CD8-positive, alpha-beta T cell (primary cell): ENCODE measurements at regions of chr10 and their contacts with region 1.

Region 1: GRCh38 chr10:101840741-101841453 is 2.7 kb downstream of the KCNIP2 start:
- DNase-seq: peak; percentile 39 to 82 (median 72)
- ATAC-seq: peak; percentile 44
- H3K4me3 ChIP-seq: peak overlapping the region; percentile 47 to 48
- H3K4me3 Mint-ChIP-seq: peak overlapping the region; percentile 84
- H3K27ac ChIP-seq: no peak overlapping the region
- H3K27ac Mint-ChIP-seq: no peak overlapping the region
- H3K4me1 ChIP-seq: peaks cover 38% of the 10 kb centered on the region
- H3K4me1 Mint-ChIP-seq: peaks cover 48% of the 10 kb centered on the region
- H3K27me3 ChIP-seq: no peaks in the 10 kb centered on the region
- H3K27me3 Mint-ChIP-seq: peaks cover 8% of the 10 kb centered on the region
- CTCF ChIP-seq: peak; percentile 84

Region 2: DNA sequence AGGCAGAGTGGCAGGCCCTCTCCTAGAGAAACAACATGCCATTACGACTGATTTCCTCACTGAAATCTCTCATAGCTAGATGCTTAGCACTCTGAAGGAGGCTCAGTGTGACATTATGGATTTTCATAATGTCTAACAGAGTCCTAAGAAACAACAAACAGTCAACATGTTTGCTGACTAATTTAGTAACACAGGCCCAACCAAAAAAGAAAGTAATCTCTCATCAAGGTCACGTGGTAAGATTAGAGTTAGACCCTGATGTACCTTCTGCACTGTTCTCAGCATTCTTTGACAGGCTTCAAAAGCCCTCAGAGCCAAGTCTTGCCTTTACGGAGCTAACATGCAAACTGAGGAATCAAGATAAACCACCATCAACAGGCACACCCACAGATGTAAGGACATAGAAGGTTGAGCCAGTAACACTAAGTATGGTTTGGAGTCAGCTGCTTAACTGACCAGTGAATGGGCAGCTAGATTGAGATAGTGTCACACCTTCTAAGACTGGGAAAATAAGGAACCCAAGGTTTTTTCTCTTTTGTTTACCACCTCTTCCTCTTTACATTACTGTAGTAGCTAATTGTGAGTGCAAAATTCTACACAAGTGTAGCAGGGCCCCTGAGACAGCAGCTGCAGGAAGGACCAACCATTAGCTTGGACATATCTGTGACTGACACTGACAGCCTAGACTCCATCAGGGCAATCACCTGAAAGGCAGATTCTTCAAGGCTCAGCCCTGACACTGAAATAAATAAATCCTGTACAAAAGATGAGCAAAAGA is 18.0 kb after region 1 on chr10:
- CTCF ChIA-PET with region 1: interaction called, 14 read pairs
- POLR2A ChIA-PET with region 1: no interaction called
- intact Hi-C with region 1: no loop called
- DNase-seq: no peak
- ATAC-seq: no peak
- H3K4me3 ChIP-seq: peak overlapping the region in 1 of 2 experiments; percentile 10
- H3K4me3 Mint-ChIP-seq: peak overlapping the region; percentile 38
- H3K27ac ChIP-seq: peak overlapping the region in 1 of 2 experiments; percentile 52
- H3K27ac Mint-ChIP-seq: no peak overlapping the region
- H3K4me1 ChIP-seq: no peaks in the 10 kb centered on the region
- H3K4me1 Mint-ChIP-seq: peaks cover 4% of the 10 kb centered on the region
- H3K27me3 ChIP-seq: no peaks in the 10 kb centered on the region
- H3K27me3 Mint-ChIP-seq: no peaks in the 10 kb centered on the region
- CTCF ChIP-seq: no peak

Region 3: GRCh38 chr10:101889256-101890210 is 48.6 kb after region 1 on chr10:
- CTCF ChIA-PET with region 1: interaction called, 15 read pairs
- POLR2A ChIA-PET with region 1: no interaction called
- intact Hi-C with region 1: no loop called
- DNase-seq: peak; percentile 27 to 73 (median 63)
- ATAC-seq: peak; percentile 76
- H3K4me3 ChIP-seq: no peak overlapping the region
- H3K4me3 Mint-ChIP-seq: no peak overlapping the region
- H3K27ac ChIP-seq: no peak overlapping the region
- H3K27ac Mint-ChIP-seq: no peak overlapping the region
- H3K4me1 ChIP-seq: no peaks in the 10 kb centered on the region
- H3K4me1 Mint-ChIP-seq: no peaks in the 10 kb centered on the region
- H3K27me3 ChIP-seq: no peaks in the 10 kb centered on the region
- H3K27me3 Mint-ChIP-seq: no peaks in the 10 kb centered on the region
- CTCF ChIP-seq: peak; percentile 88

Region 4: GRCh38 chr10:103127241-103127640 is 1286.3 kb after region 1 on chr10:
- CTCF ChIA-PET with region 1: no interaction called
- POLR2A ChIA-PET with region 1: no interaction called
- intact Hi-C with region 1: no loop called
- DNase-seq: no peak
- ATAC-seq: no peak
- H3K4me3 ChIP-seq: no peak overlapping the region
- H3K4me3 Mint-ChIP-seq: no peak overlapping the region
- H3K27ac ChIP-seq: no peak overlapping the region
- H3K27ac Mint-ChIP-seq: no peak overlapping the region
- H3K4me1 ChIP-seq: no peaks in the 10 kb centered on the region
- H3K4me1 Mint-ChIP-seq: peaks cover 22% of the 10 kb centered on the region
- H3K27me3 ChIP-seq: no peaks in the 10 kb centered on the region
- H3K27me3 Mint-ChIP-seq: no peaks in the 10 kb centered on the region
- CTCF ChIP-seq: no peak